ENCODE measurements at regions of chr19 and their contacts with region 1.

Region 1: DNA sequence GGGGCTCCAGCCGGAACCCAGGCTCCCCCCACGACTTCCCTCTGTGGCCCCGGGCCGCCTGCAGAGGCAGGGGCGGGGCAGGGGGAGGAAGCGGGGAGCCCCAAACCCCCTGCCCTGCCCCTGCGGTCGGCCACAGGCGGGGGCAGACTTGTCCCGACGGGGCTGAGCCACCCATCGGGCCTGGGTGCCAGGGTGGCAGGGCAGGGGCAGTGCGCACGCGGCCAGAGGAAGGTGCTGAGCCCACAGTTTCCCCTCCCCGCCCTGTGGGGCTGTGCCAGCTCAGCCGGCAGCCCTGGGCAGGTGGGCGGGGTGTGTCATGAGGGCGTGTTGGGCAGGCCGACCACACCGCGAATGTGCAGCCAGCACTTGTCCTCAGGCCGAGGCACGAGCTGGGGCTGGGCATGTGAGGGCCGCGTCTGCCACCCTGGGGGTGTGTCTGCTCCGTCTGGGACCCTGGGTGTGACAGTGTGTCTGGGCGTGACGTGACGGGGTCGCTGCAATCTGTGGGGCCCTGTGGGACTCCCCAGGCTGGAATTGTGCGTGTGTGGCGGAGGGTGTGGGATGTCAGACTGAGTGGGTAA is 17.7 kb downstream of the CCDC97 start:
- DNase-seq: peak; percentile 94

Region 2: GRCh38 chr19:41263850-41264580 is 63.7 kb before region 1 on chr19 and contains the start of gene HNRNPUL1:
- intact Hi-C with region 1: no loop called
- DNase-seq: peak; percentile 99
- total RNA-seq, gene HNRNPUL1: 150 to 157 TPM

Region 3: DNA sequence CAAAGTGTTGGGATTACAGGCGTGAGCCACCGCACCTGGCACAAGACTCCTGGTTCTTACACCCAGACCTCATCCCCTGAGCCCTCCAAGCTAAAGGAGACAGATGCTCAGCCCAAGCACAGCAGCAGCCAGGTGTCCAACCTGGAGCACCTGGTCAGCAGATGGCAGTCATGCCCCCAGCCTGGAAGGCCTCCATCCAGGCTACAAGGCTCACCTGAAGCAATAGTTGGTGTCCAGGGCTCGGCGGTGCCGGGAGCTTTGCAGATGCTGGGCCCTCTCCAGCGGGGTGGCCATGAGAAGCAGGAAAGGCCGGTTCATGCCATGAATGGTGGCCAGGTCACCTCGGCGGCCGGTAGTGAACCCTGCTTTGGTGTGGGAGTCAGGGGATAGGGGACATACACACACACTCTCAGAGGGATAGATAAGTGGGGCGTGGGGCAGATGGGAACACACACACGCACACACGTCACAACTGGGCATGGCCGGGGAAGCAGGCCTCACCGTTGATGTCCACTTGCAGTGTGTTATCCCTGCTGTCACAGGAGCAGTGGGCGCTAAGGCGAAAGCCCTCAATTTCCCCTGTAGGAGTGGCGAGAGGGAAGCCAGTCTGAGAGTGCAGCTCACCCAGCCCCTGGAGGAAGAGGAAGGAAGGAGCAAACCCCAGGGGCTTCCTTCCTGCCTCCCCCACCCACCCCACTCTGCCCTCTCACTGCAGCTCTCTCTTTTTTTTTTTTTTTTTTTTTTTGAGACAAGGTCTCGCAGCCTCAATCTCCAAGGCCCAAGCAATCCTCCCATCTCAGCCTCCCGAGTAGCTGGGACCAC is 14.2 kb after region 1 on chr19:
- intact Hi-C with region 1: loop called in 1 of 2 experiments (anchors 2 kb)
- DNase-seq: no peak

Region 4: DNA sequence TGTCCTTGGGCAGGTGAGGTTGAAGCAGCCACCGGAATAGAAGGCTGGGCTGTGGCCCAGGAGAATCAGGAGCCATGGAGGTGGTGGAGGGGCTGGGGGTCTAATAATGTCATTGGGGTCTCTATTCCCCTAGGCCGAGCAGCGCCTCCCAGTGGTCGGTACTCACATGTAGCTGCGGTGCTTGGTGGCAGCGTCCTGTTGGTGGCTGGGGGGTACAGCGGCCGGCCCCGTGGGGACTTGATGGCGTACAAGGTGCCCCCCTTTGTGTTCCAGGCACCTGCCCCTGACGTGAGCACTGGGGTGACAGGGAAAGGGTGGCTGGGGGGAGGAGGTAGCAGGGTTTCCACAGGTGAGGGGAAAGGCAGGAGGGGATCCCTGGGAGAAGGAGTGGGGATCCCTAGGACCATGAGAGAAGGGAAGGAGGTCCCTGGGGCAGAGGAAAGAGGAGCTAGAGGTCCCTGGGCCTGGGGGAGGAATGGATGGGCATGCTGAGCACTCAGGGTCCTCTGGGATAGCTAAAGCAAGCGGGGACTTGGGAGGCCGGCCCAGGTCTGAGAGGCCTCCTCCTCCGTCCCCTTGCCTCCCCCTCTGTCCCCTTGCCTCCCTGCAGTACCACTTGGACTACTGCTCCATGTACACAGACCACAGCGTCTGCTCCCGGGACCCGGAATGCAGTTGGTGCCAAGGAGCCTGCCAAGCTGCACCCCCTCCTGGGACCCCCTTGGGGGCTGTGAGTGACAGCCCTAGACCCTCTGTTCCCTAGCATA is 1015.9 kb after region 1 on chr19:
- intact Hi-C with region 1: no loop called
- DNase-seq: no peak